ENCODE measurements at regions of chr3 and their contacts with region 1.

Region 1: GRCh38 chr3:71130471-71131374 is 452.8 kb downstream of the FOXP1 start:
- DNase-seq: peak; percentile 66
- H3K4me3 Mint-ChIP-seq: peak overlapping the region; percentile 91
- H3K27ac Mint-ChIP-seq: peak overlapping the region; percentile 94
- H3K4me1 Mint-ChIP-seq: peaks cover 62% of the 10 kb centered on the region
- H3K27me3 Mint-ChIP-seq: no peaks in the 10 kb centered on the region

Region 2: DNA sequence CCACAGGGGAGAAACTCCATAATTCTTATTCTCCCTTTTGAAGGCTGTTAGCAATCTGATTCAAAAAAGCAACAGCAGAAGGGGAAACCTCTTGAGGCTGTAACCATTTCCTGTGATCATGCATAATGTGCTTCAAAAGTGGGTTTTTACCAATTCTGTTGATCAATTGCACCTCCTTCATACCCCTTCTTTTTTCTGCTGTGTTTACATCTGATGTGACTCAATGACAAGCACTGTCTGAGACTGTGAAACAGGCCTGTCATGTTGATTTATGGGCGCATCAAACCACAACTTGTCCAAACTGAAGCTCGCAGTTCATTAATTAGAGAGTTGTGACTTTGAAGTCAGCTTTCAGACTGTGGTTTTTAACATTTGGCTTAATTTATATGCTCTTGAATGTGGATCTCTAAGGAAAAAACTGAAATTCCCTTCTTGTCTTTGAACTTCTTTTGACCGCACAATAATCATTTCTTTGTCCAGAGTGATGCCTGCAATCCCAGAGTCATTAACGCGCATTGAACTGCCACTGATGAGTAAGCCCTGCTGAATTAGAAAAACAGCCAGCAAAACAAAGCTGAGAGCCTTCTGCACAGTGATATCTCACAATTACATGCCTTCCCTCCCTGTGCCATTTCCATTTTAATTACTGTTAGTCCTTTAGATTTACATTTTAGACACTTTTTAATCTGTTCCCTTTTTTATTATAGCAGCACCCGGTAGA is 80.0 kb before region 1 on chr3:
- intact Hi-C with region 1: no loop called
- DNase-seq: no peak
- H3K4me3 Mint-ChIP-seq: peak overlapping the region; percentile 2
- H3K27ac Mint-ChIP-seq: peak overlapping the region; percentile 86
- H3K4me1 Mint-ChIP-seq: peaks cover 95% of the 10 kb centered on the region
- H3K27me3 Mint-ChIP-seq: no peaks in the 10 kb centered on the region

Region 3: DNA sequence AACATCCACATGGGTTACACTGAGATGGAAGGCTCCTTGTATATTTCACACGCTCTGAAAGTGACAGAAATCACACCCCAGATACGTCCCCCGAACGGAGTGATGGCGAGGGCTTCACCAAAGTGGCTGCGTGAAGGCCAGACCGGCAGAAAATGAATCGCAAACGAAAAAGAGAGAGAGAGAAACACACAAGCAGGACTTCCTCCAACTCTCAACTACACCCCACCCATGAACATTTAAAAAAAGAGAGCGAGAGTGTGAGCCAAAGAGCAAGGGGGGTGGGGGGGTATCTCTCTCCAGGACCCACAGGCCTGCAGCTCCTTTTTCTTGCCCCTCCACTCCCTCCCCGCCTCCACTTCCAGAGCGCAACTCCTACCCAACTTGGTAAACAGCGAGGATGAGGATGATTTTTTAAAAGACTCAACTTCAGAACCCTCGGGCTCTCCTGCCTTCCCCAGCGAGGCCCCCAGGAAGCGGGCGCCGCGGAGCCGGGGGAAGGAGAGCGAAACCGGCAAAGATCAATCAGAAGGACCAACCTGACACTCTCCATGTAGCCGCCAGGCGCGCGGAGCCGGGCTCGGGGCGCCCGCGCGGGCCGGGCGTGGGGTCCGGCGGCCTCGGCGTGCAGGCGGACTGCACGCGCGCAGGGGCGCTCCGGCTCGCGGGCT is 66.3 kb before region 1 on chr3:
- intact Hi-C with region 1: loop called (anchors 1 kb)
- DNase-seq: peak; percentile 68
- H3K4me3 Mint-ChIP-seq: no peak overlapping the region
- H3K27ac Mint-ChIP-seq: no peak overlapping the region
- H3K4me1 Mint-ChIP-seq: peaks cover 58% of the 10 kb centered on the region
- H3K27me3 Mint-ChIP-seq: no peaks in the 10 kb centered on the region

Region 4: GRCh38 chr3:71109241-71109976 is 21.3 kb before region 1 on chr3:
- intact Hi-C with region 1: loop called (anchors 2 kb)
- DNase-seq: no peak
- H3K4me3 Mint-ChIP-seq: no peak overlapping the region
- H3K27ac Mint-ChIP-seq: peak overlapping the region; percentile 56
- H3K4me1 Mint-ChIP-seq: peaks cover 63% of the 10 kb centered on the region
- H3K27me3 Mint-ChIP-seq: no peaks in the 10 kb centered on the region

Region 5: DNA sequence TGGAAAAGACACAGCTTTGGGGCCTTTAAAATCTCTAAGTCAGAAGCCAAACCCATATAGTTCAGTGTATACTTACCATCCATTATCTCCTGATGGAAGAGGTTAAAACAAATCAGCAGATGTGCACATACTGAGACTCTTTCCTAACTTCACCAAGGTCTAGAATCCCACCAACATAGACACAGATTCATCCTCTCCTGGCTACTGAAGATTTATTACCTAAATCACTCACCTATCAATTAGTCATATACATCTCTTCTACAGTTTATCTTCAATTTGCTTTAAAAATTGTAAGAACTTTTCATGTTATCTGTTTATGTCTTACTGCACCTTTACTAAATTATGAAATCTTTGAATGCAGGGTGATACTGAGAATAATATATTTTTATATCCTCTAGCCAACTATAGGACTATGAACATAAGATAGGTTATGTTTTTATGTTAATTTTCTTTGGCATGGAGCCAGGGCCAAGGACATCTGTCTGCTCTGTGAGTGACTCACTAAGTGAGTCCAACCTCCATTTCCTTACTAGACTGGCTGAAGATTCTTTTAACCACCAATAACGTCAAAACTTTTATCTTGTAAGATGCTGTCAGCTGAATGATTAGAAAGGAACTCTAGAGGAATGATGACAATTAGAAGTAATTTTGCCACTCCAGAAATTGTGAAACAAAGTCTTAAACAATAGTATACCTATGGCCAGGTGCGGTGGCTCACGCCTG is 55.2 kb after region 1 on chr3:
- intact Hi-C with region 1: loop called (anchors 1 kb)
- DNase-seq: no peak
- H3K4me3 Mint-ChIP-seq: no peak overlapping the region
- H3K27ac Mint-ChIP-seq: peak overlapping the region; percentile 35
- H3K4me1 Mint-ChIP-seq: peaks cover 48% of the 10 kb centered on the region
- H3K27me3 Mint-ChIP-seq: no peaks in the 10 kb centered on the region

Region 6: GRCh38 chr3:71277341-71277740 is 146.6 kb after region 1 on chr3:
- intact Hi-C with region 1: no loop called
- DNase-seq: no peak
- H3K4me3 Mint-ChIP-seq: no peak overlapping the region
- H3K27ac Mint-ChIP-seq: no peak overlapping the region
- H3K4me1 Mint-ChIP-seq: no peaks in the 10 kb centered on the region
- H3K27me3 Mint-ChIP-seq: no peaks in the 10 kb centered on the region

Region 7: GRCh38 chr3:71360764-71361163 is 230.0 kb after region 1 on chr3:
- intact Hi-C with region 1: loop called (anchors 2 kb)
- DNase-seq: no peak
- H3K4me3 Mint-ChIP-seq: peak overlapping the region; percentile 52
- H3K27ac Mint-ChIP-seq: peak overlapping the region; percentile 96
- H3K4me1 Mint-ChIP-seq: peaks cover 79% of the 10 kb centered on the region
- H3K27me3 Mint-ChIP-seq: no peaks in the 10 kb centered on the region

Region 8: GRCh38 chr3:71495708-71496472 is 365.2 kb after region 1 on chr3:
- intact Hi-C with region 1: loop called (anchors 5 kb)
- DNase-seq: no peak
- H3K4me3 Mint-ChIP-seq: peak overlapping the region; percentile 66
- H3K27ac Mint-ChIP-seq: peak overlapping the region; percentile 92
- H3K4me1 Mint-ChIP-seq: peaks cover 68% of the 10 kb centered on the region
- H3K27me3 Mint-ChIP-seq: no peaks in the 10 kb centered on the region

Measured in activated T-helper 2 cell treated with anti-CD3 and anti-CD28 coated beads, Interferon-gamma antibody, Interleukin-2, Interleukin-4, amounts not matched to agents 10 μg/mL and 5 μg/mL and 100 μg/mL, durations not matched to agents 14 hours and 24 hours and 36 hours (primary cell).